Activated B cell treated with CpG ODN at 0.5 μM for 24 hours (primary cell): ENCODE measurements at regions of chr19 and their contacts with region 1.

Region 1: DNA sequence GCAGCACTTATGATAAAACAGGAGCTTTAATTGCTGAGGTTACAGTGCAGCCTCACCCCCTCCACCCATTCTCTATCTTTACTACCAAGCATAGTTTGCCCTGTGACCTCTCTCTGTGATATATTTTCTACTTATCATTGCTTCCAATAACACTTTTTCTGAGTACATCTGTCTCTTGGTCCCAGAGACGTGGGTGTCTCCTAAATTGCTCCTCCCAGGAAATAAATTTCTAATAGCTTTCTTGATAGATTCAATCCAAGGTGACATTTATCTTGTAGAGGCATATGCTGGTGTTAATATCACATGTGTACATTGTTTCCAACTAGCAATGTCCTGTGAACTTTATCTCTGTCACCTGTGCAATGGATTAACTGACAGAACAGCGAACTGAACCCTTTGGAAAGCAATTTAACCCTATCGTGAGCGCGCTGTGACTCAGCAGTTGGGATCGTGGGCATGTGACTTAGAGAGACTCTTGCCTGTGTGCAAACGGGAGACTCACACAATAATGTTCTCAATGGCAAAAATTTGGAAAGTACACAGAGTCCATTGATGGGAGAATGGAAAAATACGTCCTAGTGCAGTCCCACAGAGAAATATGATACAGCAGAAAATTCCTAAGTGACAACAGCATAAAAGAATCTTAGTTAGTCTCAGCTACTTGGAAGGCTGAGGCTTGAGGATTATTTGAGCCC is 7.0 kb upstream of the MAP2K2 start:
- DNase-seq: no peak
- ATAC-seq: no peak
- H3K4me3 Mint-ChIP-seq: no peak overlapping the region
- H3K27ac Mint-ChIP-seq: no peak overlapping the region
- H3K4me1 Mint-ChIP-seq: no peaks in the 10 kb centered on the region
- H3K27me3 Mint-ChIP-seq: peaks cover 3% of the 10 kb centered on the region
- CTCF ChIP-seq: no peak

Region 2: DNA sequence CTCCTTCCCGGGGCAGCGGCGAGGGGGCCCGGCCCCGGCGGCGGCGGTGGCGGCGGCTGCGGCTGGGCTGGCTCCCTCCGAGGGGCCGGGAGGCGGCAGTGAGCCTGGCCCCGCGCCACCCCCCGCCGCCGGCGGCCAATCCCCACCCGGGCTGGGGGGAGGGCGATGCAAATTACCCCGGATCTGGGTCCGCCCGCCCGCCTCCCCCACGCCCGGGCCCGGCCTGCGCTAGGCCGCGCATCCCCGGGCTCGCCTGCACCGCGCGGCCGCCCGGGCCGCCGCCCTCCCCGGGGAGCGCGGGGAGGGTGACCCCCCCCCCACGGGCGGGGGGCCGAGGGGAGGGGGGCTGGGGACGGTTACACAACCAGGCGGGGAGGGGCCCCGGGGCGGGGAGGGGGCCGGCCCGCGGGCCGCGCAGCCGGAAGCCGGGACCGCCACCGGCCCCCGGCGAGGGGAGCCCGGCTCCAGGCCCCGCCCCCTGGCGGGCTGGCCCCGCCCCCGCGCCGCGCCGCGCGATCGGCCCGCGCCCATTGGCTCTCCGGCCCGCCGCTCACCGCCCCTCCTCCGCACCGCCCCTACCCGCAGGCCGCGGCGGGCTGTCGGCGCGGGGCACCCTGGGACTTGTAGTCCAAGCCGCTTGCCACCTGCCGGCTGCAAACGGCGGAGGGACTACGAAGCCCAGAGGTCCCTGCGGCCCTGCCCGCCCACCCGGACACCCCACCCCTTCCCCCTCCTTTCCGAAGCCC is 65.3 kb before region 1 on chr19:
- CTCF ChIA-PET with region 1: no interaction called
- POLR2A ChIA-PET with region 1: no interaction called
- intact Hi-C with region 1: no loop called
- DNase-seq: peak; percentile 99
- ATAC-seq: peak; percentile 76
- H3K4me3 Mint-ChIP-seq: peak overlapping the region; percentile 70
- H3K27ac Mint-ChIP-seq: no peak overlapping the region
- H3K4me1 Mint-ChIP-seq: peaks cover 50% of the 10 kb centered on the region
- H3K27me3 Mint-ChIP-seq: no peaks in the 10 kb centered on the region
- CTCF ChIP-seq: no peak

Region 3: DNA sequence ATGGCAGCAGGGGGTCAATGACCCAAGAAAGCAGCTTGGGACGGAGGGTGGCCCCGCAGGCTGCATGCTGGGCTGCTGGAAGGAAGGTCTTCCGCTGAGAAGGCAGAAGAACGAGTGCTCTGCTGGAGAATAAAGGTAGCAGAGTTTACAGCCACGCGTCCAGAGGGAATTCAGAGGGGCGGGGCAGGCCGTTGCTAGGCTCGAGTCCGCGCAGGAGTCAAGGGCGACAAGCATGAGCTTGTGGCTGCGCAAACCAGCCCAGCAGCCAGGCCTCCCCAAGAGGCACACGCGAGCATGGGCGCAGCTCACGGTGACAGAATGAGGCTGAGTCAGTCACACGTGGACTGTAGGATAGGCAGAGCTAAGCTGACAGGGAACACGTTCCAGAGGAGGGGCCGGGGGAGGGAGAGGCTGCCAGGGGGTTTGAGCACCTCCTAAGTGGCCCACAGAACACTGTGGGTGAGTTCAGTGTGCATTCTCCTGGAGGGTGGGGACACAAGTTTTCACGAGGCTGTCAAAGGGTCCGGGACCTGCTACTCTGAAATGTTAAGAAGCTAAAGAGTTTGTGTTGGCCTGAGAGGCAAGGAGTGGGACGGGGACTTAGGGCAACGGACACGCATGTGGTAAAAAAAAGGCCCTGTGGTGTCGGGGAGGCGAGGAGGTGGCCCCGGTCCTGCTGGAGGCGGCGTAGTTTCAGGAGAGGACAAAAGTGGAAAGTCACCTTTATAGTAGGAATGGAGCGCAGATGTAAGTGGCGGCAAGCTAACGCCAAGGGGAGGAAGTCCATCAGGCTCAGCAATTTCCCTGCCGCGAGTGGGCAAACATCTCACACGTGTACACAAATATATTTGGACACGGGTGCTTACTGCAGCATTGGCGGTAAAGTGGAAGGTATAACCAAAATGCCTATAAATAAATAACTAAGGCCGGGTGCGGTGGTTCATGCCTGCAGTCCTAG is 1961.7 kb after region 1 on chr19:
- CTCF ChIA-PET with region 1: no interaction called
- POLR2A ChIA-PET with region 1: interaction called, 15 read pairs
- intact Hi-C with region 1: no loop called
- DNase-seq: no peak
- ATAC-seq: no peak
- H3K4me3 Mint-ChIP-seq: no peak overlapping the region
- H3K27ac Mint-ChIP-seq: no peak overlapping the region
- H3K4me1 Mint-ChIP-seq: peaks cover 15% of the 10 kb centered on the region
- H3K27me3 Mint-ChIP-seq: no peaks in the 10 kb centered on the region
- CTCF ChIP-seq: no peak